CD8-positive, alpha-beta T cell (primary cell): ENCODE measurements at regions of chrX and their contacts with region 1.

Region 1: DNA sequence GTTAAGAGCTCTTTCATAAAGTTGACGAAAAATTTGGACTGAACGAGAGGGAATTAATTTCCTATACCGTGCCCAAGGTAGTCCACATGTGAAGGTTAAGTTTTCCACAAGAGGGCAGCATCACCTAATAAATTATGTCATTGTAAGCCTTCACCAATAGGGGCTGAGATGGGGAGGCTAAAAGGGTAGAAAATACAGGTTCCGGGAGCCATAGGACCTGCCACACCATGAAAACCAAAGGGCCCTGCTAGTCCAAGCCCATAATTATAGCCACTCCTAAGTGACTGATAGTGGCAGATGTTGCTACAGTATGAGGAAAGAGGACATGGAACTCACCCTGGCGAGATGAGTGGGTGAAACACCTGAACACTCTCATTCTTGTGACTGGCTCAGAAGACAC is 122.2 kb downstream of the SHROOM4 start:
- DNase-seq: peak in 4 of 9 experiments; percentile 7 to 47 (median 21)
- ATAC-seq: peak; percentile 36
- H3K4me3 ChIP-seq: no peak overlapping the region
- H3K4me3 Mint-ChIP-seq: no peak overlapping the region
- H3K27ac ChIP-seq: no peak overlapping the region
- H3K27ac Mint-ChIP-seq: no peak overlapping the region
- H3K4me1 ChIP-seq: no peaks in the 10 kb centered on the region
- H3K4me1 Mint-ChIP-seq: no peaks in the 10 kb centered on the region
- H3K27me3 ChIP-seq: no peaks in the 10 kb centered on the region
- H3K27me3 Mint-ChIP-seq: peaks cover 11% of the 10 kb centered on the region
- CTCF ChIP-seq: peak; percentile 30

Region 2: GRCh38 chrX:50905334-50905733 is 213.5 kb after region 1 on chrX:
- CTCF ChIA-PET with region 1: no interaction called
- POLR2A ChIA-PET with region 1: no interaction called
- intact Hi-C with region 1: loop called in 1 of 2 experiments (anchors 10 kb)
- DNase-seq: no peak
- ATAC-seq: no peak
- H3K4me3 ChIP-seq: no peak overlapping the region
- H3K4me3 Mint-ChIP-seq: no peak overlapping the region
- H3K27ac ChIP-seq: no peak overlapping the region
- H3K27ac Mint-ChIP-seq: no peak overlapping the region
- H3K4me1 ChIP-seq: no peaks in the 10 kb centered on the region
- H3K4me1 Mint-ChIP-seq: no peaks in the 10 kb centered on the region
- H3K27me3 ChIP-seq: no peaks in the 10 kb centered on the region
- H3K27me3 Mint-ChIP-seq: peaks cover 2% of the 10 kb centered on the region
- CTCF ChIP-seq: no peak

Region 3: DNA sequence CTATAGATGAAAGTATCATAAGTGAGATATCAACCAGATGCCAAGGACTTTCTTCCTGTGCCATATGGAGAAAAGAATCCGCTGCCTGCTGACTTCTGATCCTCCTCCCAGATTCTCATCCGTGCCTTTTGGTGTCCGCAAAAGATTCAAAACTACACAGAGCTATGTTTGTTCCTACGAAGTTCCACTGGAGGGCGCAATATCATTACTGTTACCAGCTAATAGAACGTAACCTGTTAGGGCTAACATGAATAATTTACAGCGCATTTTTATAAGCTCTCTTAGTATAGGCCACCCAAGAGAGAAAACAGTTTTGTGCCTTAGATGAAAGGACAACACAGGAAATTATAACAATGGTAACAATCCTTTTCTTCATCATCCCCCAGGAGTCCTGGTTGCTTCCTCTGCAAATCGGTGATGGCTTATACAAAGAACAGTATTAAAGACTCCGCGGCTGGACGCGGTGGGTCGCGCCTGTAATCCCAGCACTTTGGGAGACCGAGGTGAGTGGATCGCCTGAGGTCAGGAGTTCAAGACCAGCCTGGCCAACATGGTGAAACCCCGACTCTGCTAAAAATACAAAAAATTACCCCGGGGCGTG is 949.7 kb after region 1 on chrX:
- CTCF ChIA-PET with region 1: no interaction called
- POLR2A ChIA-PET with region 1: no interaction called
- intact Hi-C with region 1: no loop called
- DNase-seq: peak in 2 of 9 experiments; percentile 22 to 48
- ATAC-seq: no peak
- H3K4me3 ChIP-seq: no peak overlapping the region
- H3K4me3 Mint-ChIP-seq: no peak overlapping the region
- H3K27ac ChIP-seq: no peak overlapping the region
- H3K27ac Mint-ChIP-seq: no peak overlapping the region
- H3K4me1 ChIP-seq: no peaks in the 10 kb centered on the region
- H3K4me1 Mint-ChIP-seq: no peaks in the 10 kb centered on the region
- H3K27me3 ChIP-seq: no peaks in the 10 kb centered on the region
- H3K27me3 Mint-ChIP-seq: peaks cover 25% of the 10 kb centered on the region
- CTCF ChIP-seq: peak; percentile 27